Gastrocnemius medialis (tissue), 4 donors: ENCODE measurements at regions of chr14 and their contacts with region 1.

Region 1: GRCh38 chr14:50542941-50543418 is 10.6 kb upstream of the MAP4K5 start:
- DNase-seq: peak in 1 of 2 donors; percentile 6
- ATAC-seq: peak; percentile 19 to 42
- H3K4me3 ChIP-seq: no peak overlapping the region
- H3K27ac ChIP-seq: peak overlapping the region in 3 of 4 donors; percentile 6 to 34 (median 28)
- H3K4me1 ChIP-seq: peaks cover 14 to 27% of the 10 kb centered on the region in 2 donors
- H3K27me3 ChIP-seq: no peaks in the 10 kb centered on the region
- CTCF ChIP-seq: peak; percentile 38 to 58 (median 44)
- POLR2A ChIP-seq: no peak

Region 2: DNA sequence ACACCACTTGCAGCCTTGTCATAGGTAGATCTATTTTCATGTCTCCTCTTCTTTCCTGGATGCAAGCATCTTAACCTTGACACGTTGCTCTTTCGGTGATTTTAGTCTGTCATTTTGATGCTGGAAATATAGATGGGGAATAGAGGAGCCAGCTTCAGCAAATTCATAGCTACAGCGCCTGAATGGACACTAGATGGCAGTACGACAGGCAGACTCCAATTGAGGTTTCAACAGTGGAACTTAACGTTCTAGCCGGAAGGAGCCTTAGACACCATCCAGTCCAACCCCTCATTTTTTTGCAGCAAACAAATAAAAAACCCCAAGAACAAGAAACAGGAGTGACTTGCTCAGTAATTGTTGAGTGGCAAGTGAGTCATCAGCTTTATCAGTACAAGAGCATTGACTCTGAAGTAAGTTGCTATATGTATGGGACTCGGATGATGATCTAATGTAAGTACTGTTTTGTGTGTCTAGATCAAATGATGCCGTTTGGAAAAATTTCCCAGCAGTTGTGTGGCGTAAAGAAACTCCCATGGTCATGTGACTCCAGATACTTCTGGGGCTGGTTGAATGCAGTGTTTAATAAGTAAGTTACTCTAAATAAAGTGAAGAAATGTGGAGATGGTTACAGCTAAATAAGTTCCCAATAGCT is 221.8 kb before region 1 on chr14:
- in situ Hi-C with region 1: loop called in 1 of 4 experiments (anchors 5 kb)
- intact Hi-C with region 1: no loop called
- DNase-seq: peak; percentile 44 to 51
- ATAC-seq: peak; percentile 96 to 99
- H3K4me3 ChIP-seq: peak overlapping the region; percentile 15 to 40 (median 28)
- H3K27ac ChIP-seq: peak overlapping the region; percentile 52 to 72 (median 63)
- H3K4me1 ChIP-seq: peaks cover 16 to 23% of the 10 kb centered on the region in 2 donors
- H3K27me3 ChIP-seq: no peaks in the 10 kb centered on the region
- CTCF ChIP-seq: peak; percentile 52 to 89 (median 77)
- POLR2A ChIP-seq: no peak

Region 3: GRCh38 chr14:50447461-50447860 is 95.5 kb before region 1 on chr14:
- in situ Hi-C with region 1: no loop called
- intact Hi-C with region 1: no loop called
- DNase-seq: no peak
- ATAC-seq: no peak
- H3K4me3 ChIP-seq: no peak overlapping the region
- H3K27ac ChIP-seq: no peak overlapping the region
- H3K4me1 ChIP-seq: no peaks in the 10 kb centered on the region
- H3K27me3 ChIP-seq: no peaks in the 10 kb centered on the region
- CTCF ChIP-seq: no peak
- POLR2A ChIP-seq: no peak

Region 4: DNA sequence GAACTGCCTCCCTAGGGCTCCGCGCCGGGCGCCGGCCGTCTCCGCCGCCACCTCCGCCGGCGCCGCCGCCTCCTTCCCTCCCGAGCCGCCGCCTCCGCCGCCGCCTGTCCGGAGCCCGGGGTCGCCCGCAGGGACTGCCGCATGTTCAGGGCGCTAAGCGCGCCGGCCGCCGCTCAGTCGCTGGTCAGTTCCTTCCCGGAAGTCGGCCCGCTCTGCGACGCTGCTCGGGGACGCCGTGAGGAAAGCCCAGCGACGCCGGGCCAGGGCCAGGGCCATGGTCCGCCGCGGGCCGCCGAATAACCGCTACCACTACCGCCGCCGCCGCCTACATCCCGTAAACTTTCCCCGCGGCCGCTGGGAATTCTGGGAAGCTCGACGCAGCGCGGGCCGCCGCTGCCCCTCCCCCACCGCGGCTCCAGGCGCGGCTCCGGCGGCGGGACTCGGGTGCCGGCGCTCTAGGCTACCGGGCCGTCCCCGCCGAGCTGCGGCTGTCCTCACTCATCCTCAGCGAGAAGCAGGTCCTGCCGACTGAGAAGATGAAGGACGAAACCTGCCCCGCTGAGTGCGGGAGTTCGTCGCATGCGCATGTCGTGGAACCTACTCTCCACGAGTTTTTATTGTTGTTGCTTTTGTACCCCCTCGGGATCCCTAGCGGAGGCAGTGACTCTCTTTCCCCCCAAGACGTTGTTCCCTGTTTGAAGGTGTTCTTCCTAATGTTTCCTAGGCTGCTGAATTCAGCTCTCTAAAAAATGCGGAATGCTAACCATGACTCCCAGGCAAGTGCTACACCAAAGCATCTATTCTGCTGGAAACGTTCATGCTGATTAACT is 125.2 kb after region 1 on chr14 and contains the start of gene SAV1:
- in situ Hi-C with region 1: no loop called
- intact Hi-C with region 1: loop called (anchors 1 kb)
- DNase-seq: peak; percentile 72 to 82
- ATAC-seq: peak; percentile 87 to 90
- H3K4me3 ChIP-seq: peak within 1 kb of the TSS; percentile 65 to 95 (median 80)
- H3K27ac ChIP-seq: peak within 1 kb of the TSS; percentile 89 to 97 (median 96)
- H3K4me1 ChIP-seq: peaks cover 27 to 29% of the 10 kb centered on the region in 2 donors
- H3K27me3 ChIP-seq: no peaks in the 10 kb centered on the region
- CTCF ChIP-seq: peak in 1 of 5 experiments; percentile 7
- POLR2A ChIP-seq: peak; percentile 93 to 94
- total RNA-seq, gene SAV1: 18.3 to 68.7 (median 36.8) TPM

Region 5: GRCh38 chr14:50736932-50737419 is 194.0 kb after region 1 on chr14:
- in situ Hi-C with region 1: no loop called
- intact Hi-C with region 1: loop called (anchors 1 kb)
- DNase-seq: no peak
- ATAC-seq: no peak
- H3K4me3 ChIP-seq: no peak overlapping the region
- H3K27ac ChIP-seq: peak overlapping the region in 3 of 4 donors; percentile 16 to 51 (median 27)
- H3K4me1 ChIP-seq: peaks cover 30 to 39% of the 10 kb centered on the region in 2 donors
- H3K27me3 ChIP-seq: no peaks in the 10 kb centered on the region
- CTCF ChIP-seq: no peak
- POLR2A ChIP-seq: no peak

Region 6: DNA sequence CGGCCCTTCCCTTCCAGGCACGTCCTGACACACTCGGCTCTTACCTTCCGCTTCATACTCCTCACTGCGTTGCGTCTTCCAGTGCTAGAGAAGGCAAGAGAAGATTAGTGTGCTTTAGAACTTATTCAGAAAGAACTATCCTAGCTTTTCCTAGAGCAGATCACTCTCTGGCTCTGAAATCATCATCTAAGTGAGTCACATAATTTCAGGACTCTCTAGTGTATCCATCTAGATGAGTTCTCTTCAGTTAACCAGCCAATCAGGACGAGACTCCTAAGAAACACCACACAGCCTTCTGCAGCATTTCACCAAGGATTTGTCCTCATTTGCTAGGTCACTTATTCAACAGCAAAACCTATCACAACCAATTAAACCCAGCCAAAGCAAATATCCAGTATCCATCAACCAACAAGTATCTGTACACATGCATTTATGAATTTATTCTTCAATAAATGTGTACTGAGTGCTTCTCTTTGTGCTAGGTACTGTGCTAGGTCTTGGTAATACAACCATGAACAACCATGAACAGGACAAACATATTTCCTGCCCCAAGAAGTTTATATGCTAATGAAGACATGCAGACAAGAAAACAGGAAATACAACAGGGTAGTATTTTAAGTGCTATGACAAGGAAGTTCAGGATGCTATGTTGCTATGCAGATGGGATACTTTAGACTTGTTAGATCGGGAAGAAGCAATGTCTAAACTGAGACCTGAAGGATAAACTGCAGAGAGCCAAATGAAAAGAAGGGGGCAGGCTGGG is 235.9 kb after region 1 on chr14:
- in situ Hi-C with region 1: loop called in 1 of 4 experiments (anchors 10 kb)
- intact Hi-C with region 1: loop called (anchors 1 kb)
- DNase-seq: no peak
- ATAC-seq: no peak
- H3K4me3 ChIP-seq: no peak overlapping the region
- H3K27ac ChIP-seq: peak overlapping the region; percentile 66 to 79 (median 74)
- H3K4me1 ChIP-seq: peaks cover 17 to 38% of the 10 kb centered on the region in 2 donors
- H3K27me3 ChIP-seq: no peaks in the 10 kb centered on the region
- CTCF ChIP-seq: no peak
- POLR2A ChIP-seq: no peak

Region 7: DNA sequence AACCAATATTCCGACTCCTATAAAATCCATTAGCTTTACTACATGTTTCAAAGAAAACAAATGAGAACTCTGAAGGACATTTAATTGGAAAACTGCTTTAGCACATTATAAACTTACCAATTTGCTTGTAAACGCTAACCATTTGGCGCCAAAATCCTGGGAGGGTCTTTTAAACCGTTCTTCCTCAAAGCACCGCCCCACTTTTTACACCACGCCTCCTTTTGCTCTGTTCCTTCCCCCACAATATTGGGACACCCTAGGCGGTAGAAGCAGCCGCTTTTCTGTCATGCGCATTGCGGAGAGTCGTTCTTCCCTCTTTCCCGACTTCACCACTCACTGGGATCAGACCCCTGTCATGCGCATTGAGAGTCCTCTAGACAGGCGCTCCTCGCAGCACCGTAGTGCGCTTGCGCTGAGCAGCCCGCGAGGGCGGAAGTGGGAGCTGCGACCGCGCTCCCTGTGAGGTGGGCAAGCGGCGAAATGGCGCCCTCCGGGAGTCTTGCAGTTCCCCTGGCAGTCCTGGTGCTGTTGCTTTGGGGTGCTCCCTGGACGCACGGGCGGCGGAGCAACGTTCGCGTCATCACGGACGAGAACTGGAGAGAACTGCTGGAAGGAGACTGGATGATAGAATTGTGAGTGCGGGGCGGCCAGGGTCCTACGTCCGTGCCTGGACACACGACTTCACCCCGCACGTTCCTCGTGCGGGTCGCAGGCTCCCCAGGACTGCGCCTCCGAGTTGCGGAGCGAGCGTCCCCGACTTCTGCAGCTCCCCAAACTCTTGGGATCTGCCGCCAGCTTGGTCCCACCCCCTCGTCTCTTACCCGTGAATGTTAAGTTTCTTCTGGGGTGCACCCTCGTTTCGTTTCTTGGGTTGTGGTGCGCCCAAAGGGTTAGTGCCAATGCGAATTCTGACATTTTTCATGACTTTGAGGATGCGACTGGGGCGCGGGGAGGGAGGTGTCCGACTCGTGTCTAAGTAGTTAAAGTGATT is 697.1 kb after region 1 on chr14 and contains the start of gene TMX1:
- in situ Hi-C with region 1: no loop called
- intact Hi-C with region 1: loop called (anchors 10 kb)
- DNase-seq: peak; percentile 94 to 98
- ATAC-seq: peak; percentile 100
- H3K4me3 ChIP-seq: peak within 1 kb of the TSS; percentile 89 to 98 (median 94)
- H3K27ac ChIP-seq: peak within 1 kb of the TSS; percentile 81 to 90 (median 88)
- H3K4me1 ChIP-seq: peaks cover 11 to 21% of the 10 kb centered on the region in 2 donors
- H3K27me3 ChIP-seq: no peaks in the 10 kb centered on the region
- CTCF ChIP-seq: no peak
- POLR2A ChIP-seq: peak; percentile 70 to 80
- total RNA-seq, gene TMX1: 13.5 to 17.3 (median 15.7) TPM